A549 (cell line): ENCODE measurements at regions of chr7 and their contacts with region 1.

Region 1: DNA sequence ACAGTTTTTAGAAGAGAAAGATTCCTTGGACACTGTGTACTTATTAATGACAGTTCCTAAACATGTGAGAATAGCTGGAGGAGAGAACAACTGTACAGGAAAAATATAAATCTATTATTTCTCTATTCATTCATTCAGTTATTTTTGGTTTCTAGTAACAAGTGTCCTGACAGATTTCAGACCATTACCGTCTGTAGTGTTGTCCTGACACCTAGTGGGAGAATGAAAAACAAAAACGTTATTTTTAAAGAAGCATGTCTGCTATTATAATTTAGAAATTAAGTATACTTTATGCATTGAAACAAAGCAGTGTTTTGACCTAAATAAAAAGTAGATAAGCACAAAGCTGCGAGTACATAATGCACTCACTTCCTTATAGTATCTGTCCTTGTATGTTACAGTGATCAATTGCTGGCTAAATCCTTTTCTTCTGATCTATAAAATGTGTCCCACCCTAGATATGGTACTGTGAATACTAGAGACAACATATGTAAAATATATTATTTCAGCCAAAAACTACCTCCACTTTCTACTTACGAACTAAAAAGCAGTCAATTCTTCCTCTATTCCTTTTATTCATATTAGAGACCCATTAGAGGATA is 575.6 kb downstream of the ARL4A start:
- DNase-seq: peak; percentile 13 to 57
- ATAC-seq: peak; percentile 64 to 83; a peak in 4 of 6 replicates
- H3K4me3 ChIP-seq: no peak overlapping the region
- H3K27ac ChIP-seq: no peak overlapping the region
- H3K4me1 ChIP-seq: no peaks in the 10 kb centered on the region
- CTCF ChIP-seq: peak; percentile 94
- EP300 ChIP-seq: no peak
- POLR2A ChIP-seq: no peak
- RAD21 ChIP-seq: peak; percentile 96 to 97

Region 2: GRCh38 chr7:12638851-12639467 is 624.1 kb before region 1 on chr7:
- CTCF ChIA-PET with region 1: interaction called, 37 read pairs
- POLR2A ChIA-PET with region 1: interaction called, 4 read pairs
- DNase-seq: peak; percentile 22 to 46
- ATAC-seq: peak; percentile 48 to 71; a peak in 3 of 6 replicates
- H3K4me3 ChIP-seq: no peak overlapping the region
- H3K27ac ChIP-seq: peak overlapping the region; percentile 23 to 64; a peak in 3 of 6 replicates
- H3K4me1 ChIP-seq: peaks cover 24% of the 10 kb centered on the region; the same call in 2 of the 3 replicates
- CTCF ChIP-seq: peak; percentile 77
- EP300 ChIP-seq: no peak
- POLR2A ChIP-seq: no peak
- RAD21 ChIP-seq: peak; percentile 88 to 90

Region 3: GRCh38 chr7:12647364-12648219 is 615.4 kb before region 1 on chr7:
- CTCF ChIA-PET with region 1: interaction called, 21 read pairs
- POLR2A ChIA-PET with region 1: no interaction called
- DNase-seq: peak; percentile 44 to 88
- ATAC-seq: peak; percentile 91 to 95
- H3K4me3 ChIP-seq: no peak overlapping the region
- H3K27ac ChIP-seq: peak overlapping the region; percentile 68 to 84
- H3K4me1 ChIP-seq: peaks cover 50% of the 10 kb centered on the region
- CTCF ChIP-seq: no peak
- EP300 ChIP-seq: peak in 1 of 2 experiments; percentile 61; a peak in 2 of 5 replicates
- POLR2A ChIP-seq: no peak
- RAD21 ChIP-seq: no peak; a peak in 1 of 5 replicates